Spleen (tissue), 13 donors: ENCODE measurements at regions of chr5 and their contacts with region 1.

Region 1: GRCh38 chr5:39580702-39581453 is 156.1 kb upstream of the DAB2 start:
- DNase-seq: no peak
- H3K4me3 ChIP-seq: no peak overlapping the region
- H3K27ac ChIP-seq: no peak overlapping the region
- H3K4me1 ChIP-seq: peaks cover 0 to 16% (median 8%) of the 10 kb centered on the region in 6 donors
- H3K27me3 ChIP-seq: no peaks in the 10 kb centered on the region
- CTCF ChIP-seq: no peak
- POLR2A ChIP-seq: no peak

Region 2: DNA sequence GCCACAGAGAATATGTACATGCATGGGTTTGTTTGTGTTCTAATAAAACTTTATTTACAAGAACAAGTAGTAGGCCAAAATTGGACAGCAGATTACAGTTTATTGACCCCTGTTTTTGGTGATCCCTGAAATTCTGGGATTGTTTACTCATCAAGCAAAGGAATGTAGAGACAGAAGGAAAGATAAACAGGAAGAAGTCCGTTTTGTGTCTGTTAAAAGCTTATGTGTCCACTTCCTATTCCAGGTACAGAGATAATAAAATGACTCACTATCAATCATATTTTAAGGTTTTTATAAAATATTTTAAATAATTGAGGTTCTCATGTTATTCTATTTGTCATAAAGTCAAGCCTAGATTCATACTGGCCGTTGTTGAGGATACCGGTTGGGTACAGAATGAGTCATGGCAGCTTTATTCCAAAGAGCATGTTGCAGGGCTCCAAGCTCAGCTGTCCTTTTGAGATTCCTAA is 58.8 kb after region 1 on chr5:
- intact Hi-C with region 1: no loop called
- DNase-seq: no peak
- H3K4me3 ChIP-seq: no peak overlapping the region
- H3K27ac ChIP-seq: no peak overlapping the region
- H3K4me1 ChIP-seq: no peaks in the 10 kb centered on the region
- H3K27me3 ChIP-seq: no peaks in the 10 kb centered on the region
- CTCF ChIP-seq: no peak
- POLR2A ChIP-seq: no peak

Region 3: GRCh38 chr5:39948867-39949468 is 368.1 kb after region 1 on chr5:
- intact Hi-C with region 1: loop called (anchors 10 kb)
- DNase-seq: no peak
- H3K4me3 ChIP-seq: no peak overlapping the region
- H3K27ac ChIP-seq: peak overlapping the region in 3 of 8 donors; percentile 71 to 82 (median 77)
- H3K4me1 ChIP-seq: peaks cover 0 to 13% (median 0%) of the 10 kb centered on the region in 6 donors
- H3K27me3 ChIP-seq: no peaks in the 10 kb centered on the region
- CTCF ChIP-seq: peak; percentile 49 to 80 (median 65)
- POLR2A ChIP-seq: no peak